Activated CD8-positive, alpha-beta T cell treated with anti-CD3 and anti-CD28 coated beads for 36 hours (primary cell): ENCODE measurements at regions of chr18 and their contacts with region 1.

Region 1: DNA sequence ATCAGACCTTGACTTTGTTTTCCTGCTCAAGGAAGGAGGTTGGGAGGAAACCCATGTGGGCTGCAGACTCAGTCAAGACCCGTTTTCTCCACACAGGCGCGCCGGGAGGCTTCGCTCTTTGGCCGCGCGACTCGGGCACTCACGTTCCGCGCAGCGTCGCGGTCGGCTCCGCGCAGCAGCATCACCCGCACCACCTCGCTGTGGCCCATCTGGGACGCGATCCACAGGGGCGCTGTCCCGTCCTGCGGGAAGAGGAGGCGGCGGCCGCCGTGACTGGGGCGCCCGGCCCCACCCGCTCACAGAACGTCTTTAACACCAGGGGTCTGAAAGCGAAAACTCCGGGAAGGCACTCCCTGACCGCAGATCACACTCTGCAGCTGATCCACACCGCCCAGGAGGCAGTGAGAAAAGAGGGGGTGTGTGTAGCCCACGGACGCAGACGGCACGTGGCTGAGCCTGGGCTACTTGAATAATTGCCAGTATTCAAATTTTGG is 33.1 kb upstream of the NPC1 start:
- DNase-seq: peak; percentile 12
- ATAC-seq: peak; percentile 38
- H3K4me3 Mint-ChIP-seq: peak overlapping the region; percentile 41
- H3K27ac Mint-ChIP-seq: no peak overlapping the region
- H3K4me1 Mint-ChIP-seq: peaks cover 6% of the 10 kb centered on the region
- H3K27me3 Mint-ChIP-seq: peaks cover 31% of the 10 kb centered on the region
- CTCF ChIP-seq: no peak

Region 2: DNA sequence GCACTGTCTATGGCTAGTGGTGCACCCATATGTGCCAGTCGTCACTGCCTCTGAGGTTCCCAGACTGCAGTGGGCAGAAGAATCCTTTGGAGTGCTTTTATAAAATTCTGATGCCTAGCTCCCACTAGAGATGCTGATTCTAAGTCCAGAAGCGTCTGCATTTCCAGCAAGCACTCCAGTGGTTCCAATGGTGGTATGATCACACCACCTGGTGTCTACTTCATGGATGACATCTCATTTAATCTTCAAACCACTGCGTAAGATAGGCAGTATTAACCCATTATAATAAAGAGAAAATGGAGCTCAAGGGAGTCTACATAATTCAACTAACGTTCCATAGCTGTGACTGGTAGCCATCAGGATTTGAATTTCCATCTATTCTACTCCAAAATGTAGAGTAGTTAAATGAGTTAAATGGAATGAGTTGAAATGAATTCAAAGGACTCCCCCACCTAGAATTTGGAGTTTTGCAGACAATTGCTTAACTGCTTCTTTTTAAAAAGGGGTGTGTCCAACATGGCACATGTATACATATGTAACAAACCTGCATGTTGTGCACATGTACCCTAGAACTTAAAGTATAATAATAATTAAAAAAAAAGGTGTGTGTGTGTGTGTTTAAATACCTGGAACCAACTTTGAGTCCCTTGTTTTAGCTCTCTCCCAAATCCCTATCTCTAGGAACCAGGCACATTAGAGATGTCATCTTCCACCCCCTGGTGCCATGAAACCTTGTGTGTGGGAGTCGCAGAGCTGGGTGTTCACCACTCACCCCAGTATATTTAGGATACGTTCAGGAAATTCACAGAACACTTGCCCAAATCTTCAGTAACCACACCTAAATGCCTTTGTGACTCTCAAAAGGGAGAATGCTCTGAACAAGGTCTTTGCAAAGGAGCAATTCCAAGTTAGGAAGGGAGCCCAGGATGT is 83.9 kb after region 1 on chr18:
- CTCF ChIA-PET with region 1: interaction called, 57 read pairs
- POLR2A ChIA-PET with region 1: no interaction called
- intact Hi-C with region 1: loop called (anchors 5 kb)
- DNase-seq: peak; percentile 15
- ATAC-seq: peak; percentile 68
- H3K4me3 Mint-ChIP-seq: no peak overlapping the region
- H3K27ac Mint-ChIP-seq: no peak overlapping the region
- H3K4me1 Mint-ChIP-seq: no peaks in the 10 kb centered on the region
- H3K27me3 Mint-ChIP-seq: peaks cover 15% of the 10 kb centered on the region
- CTCF ChIP-seq: peak; percentile 52

Region 3: GRCh38 chr18:23812546-23813440 is 193.4 kb after region 1 on chr18:
- CTCF ChIA-PET with region 1: interaction called, 9 read pairs
- POLR2A ChIA-PET with region 1: no interaction called
- intact Hi-C with region 1: loop called (anchors 5 kb)
- DNase-seq: no peak
- ATAC-seq: no peak
- H3K4me3 Mint-ChIP-seq: no peak overlapping the region
- H3K27ac Mint-ChIP-seq: no peak overlapping the region
- H3K4me1 Mint-ChIP-seq: peaks cover 25% of the 10 kb centered on the region
- H3K27me3 Mint-ChIP-seq: no peaks in the 10 kb centered on the region
- CTCF ChIP-seq: peak; percentile 72